AG04450 (cell line): ENCODE measurements at regions of chr19 and their contacts with region 1.

Region 1: GRCh38 chr19:11987405-11988281 is 22.8 kb downstream of the ZNF763 start:
- DNase-seq: peak; percentile 78
- H3K4me3 ChIP-seq: peak overlapping the region; percentile 85
- H3K27ac ChIP-seq: peak overlapping the region; percentile 73
- H3K27me3 ChIP-seq: no peaks in the 10 kb centered on the region
- CTCF ChIP-seq: no peak

Region 2: DNA sequence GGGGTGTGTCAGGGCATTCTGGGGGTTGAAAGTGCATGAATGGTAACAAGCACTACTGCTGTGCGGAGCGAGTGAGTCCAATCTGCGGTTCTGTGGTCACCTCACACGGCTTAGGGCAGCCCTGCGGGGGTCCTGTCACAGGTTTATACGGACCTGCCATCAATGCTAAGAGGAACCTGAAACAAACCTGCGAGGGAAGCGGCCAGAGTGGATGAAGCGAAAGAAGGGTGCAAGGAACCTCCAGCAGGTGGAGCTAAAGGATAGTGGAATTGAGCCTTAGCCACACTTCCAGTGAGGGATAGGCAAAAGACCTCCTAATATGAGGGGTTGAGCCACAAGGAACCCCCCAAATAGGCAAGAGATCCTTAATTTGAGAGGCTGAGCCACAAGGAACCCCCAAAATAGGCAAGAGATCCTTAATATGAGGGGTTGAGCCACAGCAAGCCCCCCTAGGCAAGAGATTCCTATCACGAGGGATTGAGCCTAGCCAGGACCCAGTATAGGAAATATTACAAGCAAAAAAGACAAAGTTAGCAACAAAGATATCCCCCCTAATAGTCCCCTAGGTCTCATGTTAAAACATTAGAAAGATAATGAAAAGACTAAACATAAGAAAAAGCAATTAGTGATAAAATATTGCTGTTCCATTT is 106.4 kb before region 1 on chr19:
- CTCF ChIA-PET with region 1: interaction called, 24 read pairs
- POLR2A ChIA-PET with region 1: no interaction called
- DNase-seq: no peak
- H3K4me3 ChIP-seq: no peak overlapping the region
- H3K27ac ChIP-seq: no peak overlapping the region
- H3K27me3 ChIP-seq: peaks cover 4% of the 10 kb centered on the region
- CTCF ChIP-seq: peak; percentile 83

Region 3: DNA sequence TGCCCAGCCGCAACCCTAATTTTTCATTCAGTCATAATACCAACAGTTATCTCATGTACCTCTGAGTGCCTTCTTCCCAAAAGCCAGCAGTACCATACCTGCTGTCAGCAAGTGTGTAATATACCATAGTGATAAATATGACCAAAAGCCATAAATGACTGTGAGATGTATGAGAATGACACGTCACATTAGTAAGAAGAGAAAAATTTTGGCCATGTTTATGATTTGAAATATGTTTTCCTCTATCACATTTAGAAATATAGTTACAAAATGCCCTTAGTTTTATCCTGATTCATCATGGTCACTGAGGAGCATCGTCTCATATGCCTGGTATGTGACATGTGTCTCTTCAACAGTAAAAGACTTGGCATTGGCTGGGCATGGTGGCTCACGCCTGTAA is 74.0 kb before region 1 on chr19:
- CTCF ChIA-PET with region 1: no interaction called
- POLR2A ChIA-PET with region 1: no interaction called
- DNase-seq: no peak
- H3K4me3 ChIP-seq: no peak overlapping the region
- H3K27ac ChIP-seq: no peak overlapping the region
- H3K27me3 ChIP-seq: no peaks in the 10 kb centered on the region
- CTCF ChIP-seq: no peak

Region 4: DNA sequence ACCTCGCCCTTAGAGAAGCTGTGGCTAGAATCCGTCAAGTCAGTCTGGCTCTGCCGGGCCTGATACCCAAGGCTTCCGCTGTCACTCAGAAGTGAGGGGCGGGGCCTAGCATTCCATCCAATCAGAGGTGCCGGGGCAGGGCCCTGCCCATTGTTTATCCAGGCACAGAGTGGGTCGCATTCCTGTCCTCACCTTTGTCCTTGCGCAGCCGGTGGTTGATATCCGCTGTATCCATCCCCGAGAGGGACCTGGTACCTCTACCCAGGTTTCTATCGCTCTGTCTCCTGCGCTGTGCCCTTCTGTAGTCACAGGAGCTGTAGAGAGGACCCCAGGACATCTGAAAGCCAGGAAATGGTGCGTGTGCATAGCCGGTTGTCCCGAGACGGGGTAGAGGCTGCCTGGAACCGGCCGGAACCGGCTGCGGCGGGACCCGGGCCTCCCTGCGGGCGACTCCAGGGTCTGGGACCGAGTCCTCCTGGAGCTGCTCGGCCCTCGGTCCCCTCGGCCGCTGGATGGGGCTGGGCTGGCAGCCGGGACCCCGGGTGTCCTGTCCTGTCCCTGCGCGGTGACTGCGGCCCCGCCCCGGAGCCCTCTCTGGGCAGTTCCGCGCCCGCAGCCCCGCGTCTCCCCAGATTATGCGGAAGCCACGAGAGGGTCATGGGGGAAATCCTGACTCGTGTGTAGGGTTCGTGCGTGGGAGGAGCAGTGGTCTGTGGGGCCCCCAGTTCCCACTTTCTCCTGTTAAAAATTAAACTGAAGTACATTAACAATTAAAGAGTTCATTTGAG is 22.6 kb before region 1 on chr19 and contains the start of gene ZNF763:
- CTCF ChIA-PET with region 1: interaction called, 32 read pairs
- POLR2A ChIA-PET with region 1: interaction called, 6 read pairs
- DNase-seq: no peak
- H3K4me3 ChIP-seq: peak within 1 kb of the TSS; percentile 84
- H3K27ac ChIP-seq: peak within 1 kb of the TSS; percentile 70
- H3K27me3 ChIP-seq: no peaks in the 10 kb centered on the region
- CTCF ChIP-seq: no peak; the same call in 1 of the 2 replicates
- polyA plus RNA-seq, gene ZNF763: 2.1 and 3.0 TPM in 2 replicates